Prostate gland (tissue), 2 donors: ENCODE measurements at regions of chr1 and their contacts with region 1.

Region 1: DNA sequence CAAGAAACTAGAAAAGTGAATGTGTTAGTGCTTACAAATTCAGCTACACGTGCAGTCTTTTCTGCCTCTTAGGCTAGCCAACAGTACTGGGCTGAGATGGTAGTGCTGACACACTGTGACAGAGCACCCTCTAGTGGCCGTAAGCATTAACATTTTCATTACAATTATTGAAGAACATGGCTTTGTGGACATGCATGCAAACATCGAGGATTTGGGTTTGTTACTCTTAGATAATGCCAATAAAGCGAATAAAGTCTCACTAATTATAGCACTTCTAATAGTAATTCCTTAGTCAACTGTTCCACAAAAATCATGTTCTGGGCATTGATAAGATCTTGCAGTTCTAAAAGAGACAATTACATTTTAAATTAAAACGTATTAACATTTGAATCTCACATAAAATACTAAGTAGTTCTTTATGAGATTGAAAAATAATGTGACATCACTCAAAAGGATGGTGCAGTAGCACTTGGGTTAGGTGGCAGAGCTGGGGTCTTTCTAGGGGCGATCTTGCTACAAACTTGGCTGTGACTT is 47.1 kb downstream of the MYSM1 start:
- DNase-seq: peak; percentile 77
- H3K4me3 ChIP-seq: no peak overlapping the region
- H3K27ac ChIP-seq: no peak overlapping the region
- H3K4me1 ChIP-seq: no peaks in the 10 kb centered on the region
- H3K27me3 ChIP-seq: no peaks in the 10 kb centered on the region
- CTCF ChIP-seq: peak; percentile 78 to 94 (median 92)
- POLR2A ChIP-seq: no peak

Region 2: GRCh38 chr1:58515794-58516401 is 136.8 kb before region 1 on chr1:
- intact Hi-C with region 1: loop called (anchors 2 kb)
- DNase-seq: peak; percentile 51
- H3K4me3 ChIP-seq: no peak overlapping the region
- H3K27ac ChIP-seq: no peak overlapping the region
- H3K4me1 ChIP-seq: no peaks in the 10 kb centered on the region
- H3K27me3 ChIP-seq: no peaks in the 10 kb centered on the region
- CTCF ChIP-seq: peak; percentile 18 to 85 (median 76)
- POLR2A ChIP-seq: no peak

Region 3: DNA sequence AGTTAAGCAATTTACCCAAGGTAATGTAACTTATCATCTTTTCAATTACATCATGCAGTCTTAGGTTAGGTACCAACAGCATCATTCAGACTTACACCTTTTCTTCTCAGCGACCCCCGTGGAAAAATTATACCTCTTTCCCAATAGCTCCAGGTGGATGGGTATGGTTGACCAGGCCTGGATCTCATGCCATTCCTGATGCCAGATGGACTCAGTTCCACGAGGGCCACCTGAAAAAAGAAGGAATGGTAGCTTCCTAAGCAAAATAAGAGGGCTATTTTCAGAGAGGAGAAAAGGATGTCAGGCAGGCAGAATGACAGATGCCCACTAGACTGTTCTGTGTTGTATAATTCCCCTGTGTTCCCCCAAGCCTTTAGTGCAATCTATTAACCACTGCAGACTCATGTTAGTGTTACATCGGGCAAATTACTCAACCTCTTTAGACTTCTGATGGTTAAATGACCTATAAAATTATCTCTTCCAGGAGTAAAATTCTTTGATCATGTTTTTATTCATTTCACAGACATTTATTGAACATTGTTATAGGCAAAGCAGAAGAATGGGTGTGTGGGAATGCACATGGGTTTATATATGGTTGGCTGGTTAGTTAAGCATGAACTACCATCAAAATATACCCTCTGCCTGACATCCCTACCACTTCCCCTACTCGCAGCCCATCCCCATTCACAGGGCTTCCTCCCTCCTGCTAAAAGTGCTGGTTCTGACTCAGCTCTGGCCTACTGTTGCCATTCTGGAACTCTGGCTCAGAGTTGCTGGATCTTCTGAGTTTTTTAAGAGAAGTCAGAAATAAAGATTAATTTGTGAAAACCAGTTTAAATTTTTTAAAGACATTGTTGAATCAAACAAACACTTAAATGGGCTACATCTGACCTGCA is 57.7 kb after region 1 on chr1:
- intact Hi-C with region 1: no loop called
- DNase-seq: no peak
- H3K4me3 ChIP-seq: no peak overlapping the region
- H3K27ac ChIP-seq: no peak overlapping the region
- H3K4me1 ChIP-seq: no peaks in the 10 kb centered on the region
- H3K27me3 ChIP-seq: no peaks in the 10 kb centered on the region
- CTCF ChIP-seq: no peak
- POLR2A ChIP-seq: no peak